Activated T-helper 1 cell treated with anti-CD3 and anti-CD28 coated beads, Interleukin-12 subunit alpha, Interleukin-12 subunit beta, Interleukin-2, Interleukin-4 antibody, amounts not matched to agents 30 ng/mL and 10 ng/mL and 1 ng/mL, durations not matched to agents 14 hours and 24 hours and 36 hours (primary cell): ENCODE measurements at regions of chr11 and their contacts with region 1.

Region 1: DNA sequence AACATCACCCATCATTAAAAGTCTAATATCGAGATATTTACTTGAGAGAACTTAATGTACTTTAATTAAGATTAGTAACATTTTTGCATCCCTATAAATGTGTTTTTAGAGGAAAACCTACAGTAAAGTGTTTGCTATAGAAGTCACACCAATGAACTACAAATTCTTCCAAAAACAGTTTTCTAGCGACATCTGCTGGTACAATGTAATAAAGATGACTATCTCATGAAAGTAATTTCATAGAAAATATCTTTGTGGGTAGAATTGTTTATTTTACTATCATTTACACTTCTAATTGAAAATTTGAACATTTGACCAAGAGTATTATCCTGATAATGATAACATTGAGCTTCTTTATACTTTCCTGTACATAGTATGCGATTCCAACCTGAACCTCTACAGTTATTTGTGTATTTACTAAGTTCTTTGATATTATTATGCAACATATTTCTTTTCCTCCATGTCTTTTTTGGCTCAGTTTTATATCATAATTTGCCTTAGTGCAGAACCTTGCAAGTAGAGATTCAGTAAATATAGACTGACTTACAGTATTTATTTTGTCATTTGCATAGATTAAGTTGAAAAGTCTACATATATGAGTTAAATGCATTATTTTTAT is 252.7 kb downstream of the TMEM135 start:
- DNase-seq: no peak
- H3K4me3 Mint-ChIP-seq: no peak overlapping the region
- H3K27ac Mint-ChIP-seq: no peak overlapping the region
- H3K4me1 Mint-ChIP-seq: no peaks in the 10 kb centered on the region
- H3K27me3 Mint-ChIP-seq: no peaks in the 10 kb centered on the region

Region 2: DNA sequence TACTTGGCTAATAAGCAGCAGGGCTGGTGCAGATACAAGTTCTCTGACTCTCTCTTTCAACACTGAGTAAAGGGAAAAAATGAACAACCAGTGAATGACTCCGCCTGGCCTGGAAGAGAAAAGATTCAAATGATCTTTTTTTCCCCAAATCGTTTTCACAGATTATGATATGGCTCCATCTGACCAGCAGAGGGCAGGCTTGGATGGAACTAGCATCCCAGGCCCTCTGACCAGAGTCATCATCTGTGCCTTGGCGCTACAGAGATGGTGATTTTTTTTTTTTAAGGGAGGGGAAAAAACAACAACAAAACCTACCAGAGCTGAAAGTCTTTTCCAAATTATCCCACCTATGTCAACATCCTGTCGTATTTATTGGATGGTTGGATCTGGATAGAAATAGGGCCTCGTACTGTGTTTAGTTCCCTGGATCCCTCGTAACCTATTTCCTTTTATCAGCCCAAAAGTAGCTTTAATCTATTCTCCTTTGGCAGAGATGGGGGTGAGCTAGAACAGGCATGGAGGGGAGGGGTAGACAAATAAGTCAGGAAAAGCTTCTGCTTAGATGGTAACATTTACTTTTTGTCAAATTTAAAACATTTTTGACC is 420.3 kb before region 1 on chr11:
- intact Hi-C with region 1: loop called (anchors 1 kb)
- DNase-seq: peak; percentile 13
- H3K4me3 Mint-ChIP-seq: no peak overlapping the region
- H3K27ac Mint-ChIP-seq: no peak overlapping the region
- H3K4me1 Mint-ChIP-seq: no peaks in the 10 kb centered on the region
- H3K27me3 Mint-ChIP-seq: peaks cover 12% of the 10 kb centered on the region

Region 3: DNA sequence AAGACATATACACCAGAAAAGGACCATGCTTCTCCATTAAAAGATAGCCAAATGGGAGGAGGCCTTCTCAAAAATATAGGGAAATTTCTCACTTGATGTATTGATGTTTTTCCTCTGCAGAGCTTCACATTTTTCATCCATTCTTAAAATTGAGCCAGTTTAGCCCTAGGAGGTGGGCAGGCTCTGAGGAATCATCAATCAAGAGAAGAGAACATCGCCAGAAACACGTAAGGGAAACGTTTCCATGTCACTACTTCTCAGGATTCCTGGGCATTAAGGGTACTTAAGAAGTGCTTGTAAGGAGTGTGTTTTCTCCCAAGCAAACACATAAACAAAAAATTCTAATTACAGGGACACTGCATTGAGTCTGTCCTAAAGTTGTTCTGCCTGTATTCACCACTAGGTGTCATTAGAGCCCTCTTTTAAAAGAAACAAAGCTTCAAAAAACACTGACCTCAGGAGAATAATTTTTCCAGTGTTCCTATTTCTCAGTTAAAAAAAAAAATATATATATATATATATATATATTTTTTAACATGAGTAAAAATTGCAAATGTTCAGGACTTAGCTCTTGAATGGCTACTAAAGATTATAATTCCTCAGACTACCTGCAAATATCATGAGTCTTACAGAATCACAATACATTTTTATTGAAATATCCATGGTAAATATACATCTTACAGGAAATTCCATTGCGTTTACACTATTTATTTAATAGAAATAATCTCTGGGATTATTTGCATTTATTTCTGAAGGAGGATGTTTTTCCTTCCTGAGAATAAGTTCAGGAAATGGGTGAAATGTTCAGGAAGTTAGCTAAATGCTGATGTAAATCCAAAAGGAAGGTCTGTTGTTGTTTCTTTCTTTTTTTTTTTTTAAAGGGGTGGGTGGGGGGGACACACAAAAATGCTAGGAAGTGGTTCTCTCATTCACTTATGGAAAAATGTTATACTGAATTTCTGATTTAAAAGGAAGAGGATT is 351.2 kb before region 1 on chr11:
- intact Hi-C with region 1: loop called (anchors 1 kb)
- DNase-seq: no peak
- H3K4me3 Mint-ChIP-seq: no peak overlapping the region
- H3K27ac Mint-ChIP-seq: no peak overlapping the region
- H3K4me1 Mint-ChIP-seq: no peaks in the 10 kb centered on the region
- H3K27me3 Mint-ChIP-seq: peaks cover 11% of the 10 kb centered on the region

Region 4: GRCh38 chr11:86978756-86979608 is 311.4 kb before region 1 on chr11:
- intact Hi-C with region 1: loop called (anchors 1 kb)
- DNase-seq: no peak
- H3K4me3 Mint-ChIP-seq: no peak overlapping the region
- H3K27ac Mint-ChIP-seq: no peak overlapping the region
- H3K4me1 Mint-ChIP-seq: no peaks in the 10 kb centered on the region
- H3K27me3 Mint-ChIP-seq: no peaks in the 10 kb centered on the region

Region 5: GRCh38 chr11:86990515-86990914 is 299.9 kb before region 1 on chr11:
- intact Hi-C with region 1: loop called (anchors 1 kb)
- DNase-seq: no peak
- H3K4me3 Mint-ChIP-seq: no peak overlapping the region
- H3K27ac Mint-ChIP-seq: no peak overlapping the region
- H3K4me1 Mint-ChIP-seq: no peaks in the 10 kb centered on the region
- H3K27me3 Mint-ChIP-seq: peaks cover 7% of the 10 kb centered on the region

Region 6: DNA sequence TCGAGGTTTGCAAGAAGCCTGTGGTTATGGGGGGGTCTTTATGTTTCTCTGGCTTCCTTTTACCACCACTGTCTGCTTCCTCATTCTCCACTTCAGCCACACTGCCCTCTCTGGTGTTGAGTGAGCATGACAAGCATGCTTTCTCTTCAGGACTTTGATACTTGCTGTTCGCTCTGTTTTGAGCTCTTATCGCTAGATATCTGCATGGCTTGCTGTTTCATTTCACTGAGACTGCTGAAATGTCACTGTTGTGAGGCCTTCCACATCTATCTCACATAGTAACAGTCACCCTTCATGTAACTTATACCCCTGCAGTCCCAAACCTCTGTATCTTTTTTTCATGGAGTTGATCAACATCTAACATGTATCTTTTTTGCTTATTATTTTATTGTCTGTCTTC is 192.8 kb before region 1 on chr11:
- intact Hi-C with region 1: loop called (anchors 5 kb)
- DNase-seq: peak; percentile 19
- H3K4me3 Mint-ChIP-seq: no peak overlapping the region
- H3K27ac Mint-ChIP-seq: no peak overlapping the region
- H3K4me1 Mint-ChIP-seq: peaks cover 10% of the 10 kb centered on the region
- H3K27me3 Mint-ChIP-seq: no peaks in the 10 kb centered on the region